Panc1 (cell line): ENCODE measurements at regions of chr2 and their contacts with region 1.

Region 1: DNA sequence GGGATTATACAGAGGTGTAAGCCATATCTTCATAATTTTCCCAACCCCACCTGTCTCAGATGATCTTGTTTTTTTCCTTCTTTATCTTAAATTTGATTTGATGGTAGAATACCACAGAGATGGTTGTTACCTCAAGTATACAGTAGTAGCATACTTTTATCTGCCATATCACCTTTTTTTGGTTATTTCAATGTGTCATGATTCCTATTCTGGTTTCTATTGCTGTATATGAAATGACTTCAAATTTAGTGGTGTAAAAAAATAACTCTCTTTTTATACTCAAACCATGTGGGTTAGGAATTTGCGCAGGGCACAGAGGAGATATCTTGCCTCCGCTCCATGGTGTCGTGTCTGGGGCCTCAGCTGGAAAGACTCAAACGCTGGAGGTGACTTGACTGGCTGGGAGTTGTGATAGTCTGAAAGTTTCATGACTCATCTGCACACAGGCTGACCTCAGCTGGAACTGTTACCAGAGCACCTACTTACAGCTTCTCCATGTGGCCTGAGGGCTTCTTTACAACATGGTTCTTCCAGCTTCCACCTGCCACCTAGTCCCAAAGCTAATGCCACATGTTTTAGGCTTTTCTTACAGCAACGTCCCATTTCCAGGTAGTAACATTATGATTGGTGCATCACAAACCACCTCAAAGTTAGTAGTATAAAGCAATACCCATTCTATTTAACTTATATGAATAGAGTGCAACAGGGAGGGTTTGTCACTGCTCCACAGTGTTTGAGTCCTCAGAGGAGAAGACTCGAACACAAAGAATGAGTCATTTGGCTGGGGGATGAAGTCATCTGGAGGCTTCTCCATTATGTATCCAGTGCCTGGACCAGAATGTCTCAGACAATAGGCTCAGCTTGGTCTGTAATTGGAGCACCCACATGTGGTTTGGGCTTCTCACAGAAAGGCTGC is 82.3 kb upstream of the XPO1 start:
- DNase-seq: peak; percentile 50
- ATAC-seq: peak; percentile 81
- H3K4me3 ChIP-seq: no peak overlapping the region
- H3K27ac ChIP-seq: no peak overlapping the region
- H3K4me1 ChIP-seq: no peaks in the 10 kb centered on the region
- H3K27me3 ChIP-seq: no peaks in the 10 kb centered on the region
- CTCF ChIP-seq: no peak

Region 2: DNA sequence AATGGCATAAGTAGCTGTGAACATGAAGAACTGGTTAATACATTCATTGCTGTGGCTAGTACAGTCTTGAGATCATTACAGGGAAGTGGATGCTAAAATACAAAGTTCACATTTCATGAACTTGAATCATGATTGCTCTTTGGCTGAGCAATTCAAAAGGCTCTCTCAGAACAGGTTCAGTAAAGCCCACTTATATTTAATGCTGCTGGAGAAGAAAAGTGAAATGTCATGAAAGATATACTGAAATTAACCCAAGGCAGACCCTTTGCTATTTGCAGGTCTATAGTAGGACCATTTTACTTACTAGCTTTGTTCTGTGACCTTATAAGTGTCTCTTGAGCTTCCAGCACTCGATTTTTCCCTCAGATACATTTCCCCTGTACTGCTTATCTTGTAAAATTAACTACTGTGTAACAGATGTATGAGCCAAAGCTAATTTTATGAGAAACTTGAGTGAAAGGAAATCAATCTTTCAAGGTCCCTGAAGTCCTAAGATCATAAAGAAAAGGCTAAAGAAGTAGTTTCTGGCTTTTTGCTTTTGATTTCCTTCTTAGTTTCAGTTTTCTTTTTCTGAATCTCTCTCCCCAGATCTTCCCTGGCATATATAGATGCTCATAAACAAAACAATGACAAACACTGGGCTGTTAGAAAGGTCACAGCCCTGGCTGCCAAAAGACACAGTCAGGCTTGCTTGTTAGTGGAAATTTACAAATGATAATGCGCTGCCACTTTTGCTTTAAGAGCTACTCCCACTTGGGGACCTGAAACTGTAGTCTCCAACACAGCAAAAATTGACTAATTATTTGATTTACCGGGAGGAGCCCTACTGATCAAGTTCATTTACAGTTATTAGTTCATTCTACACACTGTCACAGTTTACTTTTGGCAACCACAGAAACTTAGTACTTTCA is 50.3 kb after region 1 on chr2:
- CTCF ChIA-PET with region 1: no interaction called
- POLR2A ChIA-PET with region 1: interaction called, 11 read pairs
- in situ Hi-C with region 1: no loop called
- intact Hi-C with region 1: no loop called
- DNase-seq: peak; percentile 65
- ATAC-seq: peak; percentile 96
- H3K4me3 ChIP-seq: peak overlapping the region; percentile 32 to 45
- H3K27ac ChIP-seq: peak overlapping the region; percentile 96
- H3K4me1 ChIP-seq: peaks cover 9% of the 10 kb centered on the region
- H3K27me3 ChIP-seq: no peaks in the 10 kb centered on the region
- CTCF ChIP-seq: no peak

Region 3: DNA sequence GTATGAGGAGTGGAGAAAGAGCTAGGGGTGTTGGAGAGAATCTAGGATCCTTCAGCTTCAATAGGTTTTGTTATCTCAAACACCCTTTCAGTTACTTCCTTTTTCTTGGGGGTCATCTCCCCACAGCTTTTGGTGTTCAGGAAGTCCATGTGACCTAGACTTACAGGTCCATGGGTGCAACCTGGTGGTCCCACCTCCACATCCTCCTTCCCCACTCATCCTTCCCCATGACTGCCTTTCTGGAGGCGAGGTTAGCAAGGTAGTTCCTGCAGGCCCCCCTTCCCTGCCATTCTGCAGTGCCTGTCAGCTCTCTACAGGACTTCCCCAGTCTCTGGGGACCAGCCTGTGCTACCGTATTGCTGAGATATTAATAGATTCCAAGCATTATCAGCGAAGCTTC is 777.9 kb after region 1 on chr2:
- CTCF ChIA-PET with region 1: no interaction called
- POLR2A ChIA-PET with region 1: no interaction called
- in situ Hi-C with region 1: no loop called
- intact Hi-C with region 1: no loop called
- DNase-seq: no peak
- ATAC-seq: no peak
- H3K4me3 ChIP-seq: no peak overlapping the region
- H3K27ac ChIP-seq: no peak overlapping the region
- H3K4me1 ChIP-seq: no peaks in the 10 kb centered on the region
- H3K27me3 ChIP-seq: no peaks in the 10 kb centered on the region
- CTCF ChIP-seq: no peak